K562 (cell line): ENCODE measurements at regions of chr1 and their contacts with region 1.

Region 1: GRCh38 chr1:69737527-69738185 is 169.9 kb downstream of the LRRC7 start:
- DNase-seq: peak; percentile 21 to 77 (median 32)
- ATAC-seq: peak; percentile 91
- H3K4me3 ChIP-seq: no peak overlapping the region
- H3K27ac ChIP-seq: no peak overlapping the region
- H3K4me1 ChIP-seq: no peaks in the 10 kb centered on the region
- H3K27me3 ChIP-seq: no peaks in the 10 kb centered on the region
- CTCF ChIP-seq: peak; percentile 61 to 70 (median 68)
- EP300 ChIP-seq: no peak
- POLR2A ChIP-seq: no peak
- RAD21 ChIP-seq: peak; percentile 90 to 91

Region 2: DNA sequence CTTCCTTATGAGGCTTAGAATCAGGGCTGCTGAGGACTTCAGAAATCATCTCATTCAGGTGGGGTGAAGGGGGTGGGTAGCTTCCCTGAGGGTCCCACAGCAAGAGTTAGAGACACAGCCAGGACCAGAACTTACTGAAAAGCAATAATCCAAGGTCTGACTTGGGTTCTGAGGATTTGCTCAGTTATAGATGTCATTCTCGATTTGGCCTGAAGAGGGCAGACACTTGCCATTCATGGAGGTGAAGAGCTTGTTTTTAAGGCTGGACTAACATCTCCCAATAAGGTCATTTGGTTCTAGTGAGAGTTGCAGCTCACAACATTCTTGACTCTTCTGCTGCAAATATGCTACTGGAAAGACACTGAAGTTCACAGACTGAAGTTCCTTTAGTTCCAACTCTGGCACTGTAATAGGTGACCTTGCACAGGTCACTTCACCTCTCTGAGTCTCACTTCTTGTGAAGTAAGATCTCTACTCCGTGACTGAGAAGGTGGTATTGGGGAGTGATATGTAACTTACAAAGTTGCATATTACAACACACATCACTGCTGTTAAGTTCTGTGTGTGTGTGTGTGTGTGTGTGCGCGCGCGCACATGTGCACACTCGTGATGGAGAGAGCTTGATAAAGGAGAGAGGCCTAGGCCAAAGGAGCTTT is 1617.4 kb before region 1 on chr1:
- CTCF ChIA-PET with region 1: interaction called, 4 read pairs
- POLR2A ChIA-PET with region 1: no interaction called
- in situ Hi-C with region 1: loop called (anchors 25 kb)
- intact Hi-C with region 1: loop called (anchors 5 kb)
- DNase-seq: peak; percentile 55 to 70 (median 66)
- ATAC-seq: peak; percentile 85
- H3K4me3 ChIP-seq: no peak overlapping the region
- H3K27ac ChIP-seq: no peak overlapping the region
- H3K4me1 ChIP-seq: no peaks in the 10 kb centered on the region
- H3K27me3 ChIP-seq: 0 out of 5 replicates have a peak, but pooled peaks cover 0 to 4% of the 10 kb centered on the region in 2 experiments
- CTCF ChIP-seq: peak; percentile 63 to 85 (median 80)
- EP300 ChIP-seq: no peak
- POLR2A ChIP-seq: no peak
- RAD21 ChIP-seq: peak; percentile 82 to 88

Region 3: GRCh38 chr1:68470388-68470970 is 1267.2 kb before region 1 on chr1:
- CTCF ChIA-PET with region 1: interaction called, 5 read pairs
- POLR2A ChIA-PET with region 1: no interaction called
- in situ Hi-C with region 1: loop called (anchors 25 kb)
- intact Hi-C with region 1: loop called (anchors 2 kb)
- DNase-seq: peak in 1 of 4 experiments; percentile 17
- ATAC-seq: peak; percentile 66; the same call in 2 of the 3 replicates
- H3K4me3 ChIP-seq: no peak overlapping the region
- H3K27ac ChIP-seq: no peak overlapping the region
- H3K4me1 ChIP-seq: no peaks in the 10 kb centered on the region
- H3K27me3 ChIP-seq: no peaks in the 10 kb centered on the region
- CTCF ChIP-seq: peak; percentile 16 to 70 (median 47); a peak in 4 of 6 replicates
- EP300 ChIP-seq: no peak
- POLR2A ChIP-seq: no peak
- RAD21 ChIP-seq: peak; percentile 62 to 64

Region 4: GRCh38 chr1:69305621-69306020 is 432.0 kb before region 1 on chr1:
- CTCF ChIA-PET with region 1: no interaction called
- POLR2A ChIA-PET with region 1: no interaction called
- in situ Hi-C with region 1: no loop called
- intact Hi-C with region 1: loop called (anchors 10 kb)
- DNase-seq: peak in 1 of 4 experiments; percentile 39
- ATAC-seq: peak; percentile 88
- H3K4me3 ChIP-seq: no peak overlapping the region
- H3K27ac ChIP-seq: no peak overlapping the region
- H3K4me1 ChIP-seq: no peaks in the 10 kb centered on the region
- H3K27me3 ChIP-seq: no peaks in the 10 kb centered on the region
- CTCF ChIP-seq: peak; percentile 43 to 62 (median 56)
- EP300 ChIP-seq: no peak
- POLR2A ChIP-seq: no peak
- RAD21 ChIP-seq: no peak; a peak in 1 of 4 replicates

Region 5: DNA sequence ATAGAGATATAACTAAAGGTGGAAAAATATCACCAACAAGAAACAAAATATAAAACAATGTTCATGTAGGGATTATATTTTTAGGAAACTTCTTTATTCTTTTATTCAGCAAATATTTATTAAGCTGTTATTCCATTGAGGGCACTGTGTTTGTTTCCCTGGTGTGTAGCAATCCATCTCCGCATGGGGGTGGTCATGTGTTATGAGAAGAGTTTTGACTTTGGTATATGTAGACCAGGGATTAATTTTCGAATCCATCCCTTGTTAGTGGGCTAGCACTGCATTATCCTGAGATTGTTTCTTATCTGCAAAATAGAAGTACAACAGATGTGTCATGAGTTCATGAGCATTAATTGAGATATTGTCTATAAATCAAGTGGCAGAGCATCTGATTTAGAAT is 360.1 kb before region 1 on chr1:
- CTCF ChIA-PET with region 1: interaction called, 10 read pairs
- POLR2A ChIA-PET with region 1: no interaction called
- in situ Hi-C with region 1: no loop called
- intact Hi-C with region 1: loop called (anchors 1 kb)
- DNase-seq: peak in 2 of 4 experiments; percentile 20 to 52
- ATAC-seq: peak; percentile 77
- H3K4me3 ChIP-seq: no peak overlapping the region
- H3K27ac ChIP-seq: no peak overlapping the region
- H3K4me1 ChIP-seq: no peaks in the 10 kb centered on the region
- H3K27me3 ChIP-seq: no peaks in the 10 kb centered on the region
- CTCF ChIP-seq: peak; percentile 44 to 64 (median 49); a peak in 4 of 6 replicates
- EP300 ChIP-seq: no peak
- POLR2A ChIP-seq: no peak
- RAD21 ChIP-seq: peak; percentile 51 to 63

Region 6: GRCh38 chr1:69459244-69459643 is 278.4 kb before region 1 on chr1:
- CTCF ChIA-PET with region 1: no interaction called
- POLR2A ChIA-PET with region 1: no interaction called
- in situ Hi-C with region 1: no loop called
- intact Hi-C with region 1: loop called (anchors 2 kb)
- DNase-seq: no peak
- ATAC-seq: peak; percentile 64; the same call in 1 of the 3 replicates
- H3K4me3 ChIP-seq: no peak overlapping the region
- H3K27ac ChIP-seq: no peak overlapping the region
- H3K4me1 ChIP-seq: no peaks in the 10 kb centered on the region
- H3K27me3 ChIP-seq: no peaks in the 10 kb centered on the region
- CTCF ChIP-seq: peak in 2 of 3 experiments; percentile 15 to 28; a peak in 3 of 6 replicates
- EP300 ChIP-seq: no peak
- POLR2A ChIP-seq: no peak
- RAD21 ChIP-seq: peak in 1 of 2 experiments; percentile 55; a peak in 2 of 4 replicates

Region 7: DNA sequence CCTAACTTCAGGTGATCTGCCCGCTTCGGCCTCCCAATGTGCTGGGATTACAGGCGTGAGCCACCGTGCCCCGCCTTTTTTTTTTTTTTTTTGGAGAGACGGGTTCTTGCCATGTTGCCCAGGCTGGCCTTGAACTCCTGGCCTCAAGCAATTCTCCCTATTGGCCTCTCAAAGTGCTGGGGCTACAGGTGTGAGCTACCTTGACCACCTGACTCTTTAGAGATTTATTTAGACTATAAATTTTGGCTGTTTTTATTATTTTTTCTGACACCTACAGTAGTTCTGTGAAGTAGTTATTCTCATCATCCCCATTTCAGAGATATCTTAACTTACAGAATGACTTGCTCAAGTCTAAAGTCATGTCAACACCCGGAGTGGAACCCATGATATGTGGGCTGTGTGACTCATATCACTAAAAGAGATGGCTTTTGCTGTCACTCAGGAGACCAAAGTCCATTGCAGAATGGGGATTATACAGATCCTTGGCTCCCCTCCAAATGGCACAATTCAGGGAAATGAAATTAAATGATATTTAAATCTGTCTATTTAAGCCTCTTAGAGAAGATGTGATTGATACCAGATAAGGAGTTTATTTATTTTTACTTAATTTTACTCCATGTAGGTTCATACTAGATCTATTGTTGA is 766.6 kb after region 1 on chr1:
- CTCF ChIA-PET with region 1: no interaction called
- POLR2A ChIA-PET with region 1: no interaction called
- in situ Hi-C with region 1: no loop called
- intact Hi-C with region 1: no loop called
- DNase-seq: peak; percentile 21 to 77 (median 44)
- ATAC-seq: peak; percentile 86
- H3K4me3 ChIP-seq: no peak overlapping the region
- H3K27ac ChIP-seq: no peak overlapping the region
- H3K4me1 ChIP-seq: no peaks in the 10 kb centered on the region
- H3K27me3 ChIP-seq: no peaks in the 10 kb centered on the region; a peak in 1 of 5 replicates
- CTCF ChIP-seq: no peak
- EP300 ChIP-seq: peak; percentile 57; the same call in 1 of the 2 replicates
- POLR2A ChIP-seq: no peak
- RAD21 ChIP-seq: no peak